Endothelial cell of umbilical vein (primary cell): ENCODE measurements at regions of chr4 and their contacts with region 1.

Region 1: DNA sequence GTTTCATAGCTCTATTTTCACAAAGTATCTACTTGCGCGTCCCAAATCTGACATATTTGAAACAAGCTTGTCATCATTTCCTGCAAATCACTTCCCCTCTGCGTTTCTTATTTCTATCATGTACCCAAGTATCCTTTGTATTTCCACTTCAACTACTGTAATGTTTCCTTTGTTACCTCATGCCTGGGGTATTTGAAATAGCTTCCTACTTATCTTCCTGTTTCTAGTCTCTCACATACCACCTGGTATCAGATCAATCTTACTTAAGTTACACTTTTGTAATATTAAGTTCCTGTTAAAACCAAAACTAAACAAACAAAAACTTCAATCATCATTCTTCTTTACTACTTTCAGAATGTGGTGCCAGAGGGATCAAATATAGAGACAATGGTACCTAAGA is 93.6 kb upstream of the SMAD1 start:
- DNase-seq: peak; percentile 80
- H3K4me3 ChIP-seq: peak overlapping the region in 1 of 3 experiments; percentile 32
- H3K27ac ChIP-seq: peak overlapping the region; percentile 67
- H3K4me1 ChIP-seq: peaks cover 25% of the 10 kb centered on the region
- H3K27me3 ChIP-seq: no peaks in the 10 kb centered on the region
- CTCF ChIP-seq: no peak
- POLR2A ChIP-seq: no peak

Region 2: GRCh38 chr4:145154573-145154972 is 233.5 kb before region 1 on chr4:
- CTCF ChIA-PET with region 1: no interaction called
- POLR2A ChIA-PET with region 1: no interaction called
- dilution Hi-C with region 1: no loop called
- intact Hi-C with region 1: loop called (anchors 10 kb)
- DNase-seq: peak; percentile 73
- H3K4me3 ChIP-seq: no peak overlapping the region
- H3K27ac ChIP-seq: peak overlapping the region; percentile 46
- H3K4me1 ChIP-seq: peaks cover 28% of the 10 kb centered on the region
- H3K27me3 ChIP-seq: no peaks in the 10 kb centered on the region
- CTCF ChIP-seq: peak; percentile 53 to 66
- POLR2A ChIP-seq: no peak

Region 3: GRCh38 chr4:145279122-145279960 is 108.7 kb before region 1 on chr4:
- CTCF ChIA-PET with region 1: no interaction called
- POLR2A ChIA-PET with region 1: no interaction called
- dilution Hi-C with region 1: no loop called
- intact Hi-C with region 1: loop called (anchors 1 kb)
- DNase-seq: peak; percentile 84
- H3K4me3 ChIP-seq: no peak overlapping the region
- H3K27ac ChIP-seq: peak overlapping the region; percentile 97
- H3K4me1 ChIP-seq: peaks cover 38% of the 10 kb centered on the region
- H3K27me3 ChIP-seq: no peaks in the 10 kb centered on the region
- CTCF ChIP-seq: no peak
- POLR2A ChIP-seq: no peak

Region 4: GRCh38 chr4:145285928-145286327 is 102.1 kb before region 1 on chr4:
- CTCF ChIA-PET with region 1: interaction called, 4 read pairs
- POLR2A ChIA-PET with region 1: no interaction called
- dilution Hi-C with region 1: no loop called
- intact Hi-C with region 1: loop called (anchors 1 kb)
- DNase-seq: peak; percentile 65
- H3K4me3 ChIP-seq: no peak overlapping the region
- H3K27ac ChIP-seq: peak overlapping the region; percentile 8
- H3K4me1 ChIP-seq: peaks cover 29% of the 10 kb centered on the region
- H3K27me3 ChIP-seq: no peaks in the 10 kb centered on the region
- CTCF ChIP-seq: no peak
- POLR2A ChIP-seq: no peak

Region 5: DNA sequence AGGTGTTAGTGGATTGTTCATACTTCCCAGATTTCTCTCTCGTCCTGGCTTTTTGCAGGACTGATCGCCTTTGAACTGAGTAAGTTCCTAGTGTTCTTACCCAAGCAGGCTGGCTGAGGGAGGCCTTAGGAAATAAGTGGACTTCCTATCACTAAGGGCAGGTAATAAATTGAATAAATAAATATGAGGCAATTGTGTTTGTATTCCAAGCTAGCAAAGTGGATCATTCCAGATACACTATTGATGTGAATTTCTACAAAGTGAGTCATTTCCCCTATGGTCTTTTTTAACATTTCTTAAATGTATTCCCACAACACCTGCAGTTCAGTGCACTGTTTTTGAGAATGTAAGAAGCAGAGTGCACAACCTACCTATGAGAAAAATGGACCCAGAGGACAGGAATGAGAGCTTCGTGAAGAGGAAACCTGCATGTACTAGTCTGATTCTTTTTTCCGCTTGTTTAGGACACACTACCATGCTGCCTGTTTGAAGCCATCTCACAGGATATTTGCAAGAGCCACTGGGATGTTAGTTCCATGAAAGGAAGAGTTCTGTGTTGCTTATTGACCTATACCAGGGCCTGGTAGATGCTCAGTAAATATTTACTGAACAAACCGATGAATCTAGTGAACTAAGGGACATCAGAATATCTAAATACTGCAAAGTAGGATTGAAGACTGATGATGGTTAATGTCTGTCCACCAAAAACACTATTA is 64.6 kb after region 1 on chr4:
- CTCF ChIA-PET with region 1: interaction called, 3 read pairs
- POLR2A ChIA-PET with region 1: no interaction called
- dilution Hi-C with region 1: no loop called
- intact Hi-C with region 1: loop called (anchors 1 kb)
- DNase-seq: peak; percentile 55
- H3K4me3 ChIP-seq: no peak overlapping the region
- H3K27ac ChIP-seq: peak overlapping the region; percentile 45
- H3K4me1 ChIP-seq: peaks cover 20% of the 10 kb centered on the region
- H3K27me3 ChIP-seq: peaks cover 0 to 4% of the 10 kb centered on the region in 2 experiments
- CTCF ChIP-seq: no peak
- POLR2A ChIP-seq: no peak

Region 6: DNA sequence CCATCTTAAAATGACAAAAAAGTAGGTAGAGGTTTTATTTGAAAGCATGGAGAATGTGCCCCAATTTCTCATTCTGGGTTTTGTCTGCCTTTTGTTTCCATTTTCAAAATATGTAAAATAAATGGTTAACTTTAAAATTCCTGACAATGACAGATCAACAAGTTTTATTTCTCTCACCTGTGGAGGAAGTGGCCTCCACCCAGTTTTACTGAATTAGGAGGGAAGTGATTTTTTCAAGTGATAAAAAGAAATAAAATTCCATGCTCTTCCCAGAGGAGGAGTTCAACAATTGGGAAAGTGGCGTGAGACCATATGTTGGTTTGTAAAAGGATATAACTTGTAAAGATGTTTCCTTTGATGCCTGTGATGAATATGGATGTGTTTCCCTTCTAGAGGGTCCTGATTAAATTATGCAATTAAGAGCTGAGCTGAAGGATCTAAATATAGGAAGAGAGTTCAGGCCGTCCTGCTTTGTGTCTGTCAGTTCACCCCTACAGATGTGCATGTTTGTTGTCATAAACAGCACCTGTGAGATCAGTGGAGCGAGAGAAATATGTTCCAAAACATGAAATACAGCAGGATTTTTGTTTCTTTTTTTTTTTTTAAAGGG is 113.1 kb after region 1 on chr4:
- CTCF ChIA-PET with region 1: no interaction called
- POLR2A ChIA-PET with region 1: no interaction called
- dilution Hi-C with region 1: no loop called
- intact Hi-C with region 1: loop called (anchors 1 kb)
- DNase-seq: peak; percentile 91
- H3K4me3 ChIP-seq: no peak overlapping the region
- H3K27ac ChIP-seq: peak overlapping the region; percentile 27
- H3K4me1 ChIP-seq: peaks cover 54% of the 10 kb centered on the region
- H3K27me3 ChIP-seq: no peaks in the 10 kb centered on the region
- CTCF ChIP-seq: no peak
- POLR2A ChIP-seq: no peak

Region 7: GRCh38 chr4:145557720-145558119 is 169.7 kb after region 1 on chr4:
- CTCF ChIA-PET with region 1: interaction called, 8 read pairs
- POLR2A ChIA-PET with region 1: no interaction called
- dilution Hi-C with region 1: no loop called
- intact Hi-C with region 1: loop called (anchors 2 kb)
- DNase-seq: peak; percentile 81
- H3K4me3 ChIP-seq: no peak overlapping the region
- H3K27ac ChIP-seq: no peak overlapping the region
- H3K4me1 ChIP-seq: peaks cover 11% of the 10 kb centered on the region
- H3K27me3 ChIP-seq: no peaks in the 10 kb centered on the region
- CTCF ChIP-seq: peak; percentile 88 to 89
- POLR2A ChIP-seq: no peak